Activated T-helper 1 cell treated with anti-CD3 and anti-CD28 coated beads, Interleukin-12 subunit alpha, Interleukin-12 subunit beta, Interleukin-2, Interleukin-4 antibody, amounts not matched to agents 30 ng/mL and 10 ng/mL and 1 ng/mL, durations not matched to agents 14 hours and 24 hours and 36 hours (primary cell): ENCODE measurements at regions of chr2 and their contacts with region 1.

Region 1: GRCh38 chr2:151619337-151619989 is 114.8 kb downstream of the NEB start:
- DNase-seq: no peak
- H3K4me3 Mint-ChIP-seq: no peak overlapping the region
- H3K27ac Mint-ChIP-seq: no peak overlapping the region
- H3K4me1 Mint-ChIP-seq: peaks cover 12% of the 10 kb centered on the region
- H3K27me3 Mint-ChIP-seq: peaks cover 5% of the 10 kb centered on the region

Region 2: DNA sequence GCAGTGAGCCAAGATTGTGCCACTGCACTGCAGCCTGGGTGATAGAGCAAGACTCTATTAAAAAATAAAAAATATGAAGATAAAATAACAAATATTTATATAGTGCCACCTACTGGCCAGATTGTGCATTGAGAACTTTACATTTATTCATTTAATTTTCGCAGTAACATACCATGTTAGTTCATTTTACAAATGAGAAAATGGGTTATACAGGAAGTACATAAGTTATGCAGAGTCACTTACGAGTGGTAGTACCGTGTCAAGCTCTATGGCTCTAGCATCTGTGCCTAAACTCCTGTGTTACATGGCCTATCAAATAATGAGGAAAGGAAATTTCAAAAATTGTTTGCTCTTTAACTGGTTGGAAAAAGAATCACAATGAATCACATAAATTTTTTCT is 181.8 kb before region 1 on chr2:
- intact Hi-C with region 1: no loop called
- DNase-seq: no peak
- H3K4me3 Mint-ChIP-seq: no peak overlapping the region
- H3K27ac Mint-ChIP-seq: peak overlapping the region; percentile 29
- H3K4me1 Mint-ChIP-seq: peaks cover 19% of the 10 kb centered on the region
- H3K27me3 Mint-ChIP-seq: no peaks in the 10 kb centered on the region

Region 3: DNA sequence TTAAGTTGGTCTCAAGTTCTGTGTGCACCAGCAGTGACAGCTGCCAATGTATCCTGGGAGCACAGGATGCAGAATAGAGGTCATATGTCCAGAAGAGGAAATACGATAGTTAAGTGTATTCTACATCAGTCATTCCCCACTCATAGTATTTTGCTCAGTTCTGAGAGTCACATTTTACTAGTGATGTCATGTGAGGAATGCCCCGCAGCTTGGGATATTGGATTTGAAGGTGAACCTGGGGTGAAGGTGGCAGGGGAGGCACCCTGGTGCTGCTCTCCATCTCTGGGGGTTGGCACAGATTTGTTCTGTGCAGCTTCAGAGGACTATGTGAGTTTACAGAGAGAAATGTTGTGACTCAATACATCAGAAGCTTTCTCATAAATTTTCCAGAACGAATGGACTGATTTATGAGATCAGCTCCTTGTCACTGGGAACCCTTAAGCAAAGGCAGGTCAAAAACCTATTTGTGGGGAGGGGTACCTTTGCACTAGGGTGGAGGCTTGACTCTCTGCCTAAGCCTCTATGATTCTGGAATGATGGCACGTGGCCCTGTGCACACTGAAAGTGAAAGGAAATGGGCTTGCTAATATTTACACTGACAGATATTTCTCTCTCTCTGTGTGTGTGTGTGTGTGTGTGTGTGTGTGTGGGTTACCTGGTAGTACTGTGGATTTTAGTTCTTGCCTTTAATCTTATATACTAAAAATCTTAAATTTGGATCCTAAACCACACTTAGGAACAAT is 18.9 kb after region 1 on chr2:
- intact Hi-C with region 1: loop called (anchors 2 kb)
- DNase-seq: no peak
- H3K4me3 Mint-ChIP-seq: peak overlapping the region; percentile 2
- H3K27ac Mint-ChIP-seq: peak overlapping the region; percentile 12
- H3K4me1 Mint-ChIP-seq: peaks cover 27% of the 10 kb centered on the region
- H3K27me3 Mint-ChIP-seq: no peaks in the 10 kb centered on the region

Region 4: DNA sequence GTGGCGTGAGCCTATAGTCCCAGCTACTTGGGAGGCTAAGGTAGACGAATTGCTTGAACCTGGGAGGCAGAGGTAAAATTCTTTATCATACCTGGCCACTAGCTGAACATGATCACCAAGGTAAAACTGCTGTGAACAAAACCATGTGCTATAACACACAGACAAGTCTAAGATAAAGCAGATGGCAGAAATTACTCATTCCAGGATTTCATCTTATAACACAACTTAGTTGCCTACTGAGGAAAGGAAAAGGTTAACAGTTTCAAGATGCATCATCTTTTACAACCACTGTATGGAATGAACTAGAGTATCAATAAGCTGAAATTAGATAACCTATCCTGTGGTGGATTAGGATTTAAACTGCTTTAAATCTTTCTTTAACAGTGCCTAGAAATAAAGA is 200.5 kb after region 1 on chr2:
- intact Hi-C with region 1: loop called (anchors 2 kb)
- DNase-seq: no peak
- H3K4me3 Mint-ChIP-seq: no peak overlapping the region
- H3K27ac Mint-ChIP-seq: peak overlapping the region; percentile 68
- H3K4me1 Mint-ChIP-seq: peaks cover 51% of the 10 kb centered on the region
- H3K27me3 Mint-ChIP-seq: no peaks in the 10 kb centered on the region

Region 5: DNA sequence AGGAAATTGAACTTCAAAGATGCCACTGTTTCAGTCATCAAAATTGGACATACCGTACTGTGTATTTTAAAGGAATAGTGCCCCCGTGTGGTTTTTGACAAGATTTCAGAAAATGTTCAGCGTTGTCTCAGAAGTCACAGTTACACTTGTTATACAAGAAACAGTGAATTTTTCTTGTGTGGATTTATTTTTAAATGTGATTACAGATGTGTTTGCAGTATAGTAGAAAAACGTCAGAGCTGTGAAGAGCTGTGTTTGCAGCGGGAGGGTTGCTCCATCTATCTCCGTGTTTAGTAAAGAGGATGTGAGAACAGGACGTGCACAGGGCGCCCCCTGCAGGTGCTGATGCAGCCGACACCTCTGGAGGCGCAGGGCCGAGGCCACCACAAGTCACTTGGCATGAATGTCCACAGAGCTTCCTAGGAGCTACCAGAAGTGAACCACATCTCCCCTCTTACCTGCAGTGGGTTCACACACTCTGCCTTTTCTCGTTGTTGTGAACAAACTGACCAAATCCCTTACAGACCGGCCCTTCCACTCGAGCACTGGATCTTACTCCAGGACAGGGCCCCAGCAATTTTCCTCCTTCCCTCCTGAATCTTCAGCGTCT is 406.3 kb after region 1 on chr2:
- intact Hi-C with region 1: loop called (anchors 10 kb)
- DNase-seq: peak; percentile 65
- H3K4me3 Mint-ChIP-seq: peak overlapping the region; percentile 72
- H3K27ac Mint-ChIP-seq: peak overlapping the region; percentile 36
- H3K4me1 Mint-ChIP-seq: peaks cover 11% of the 10 kb centered on the region
- H3K27me3 Mint-ChIP-seq: peaks cover 20% of the 10 kb centered on the region